ENCODE measurements at regions of chr3 and their contacts with region 1.

Region 1: DNA sequence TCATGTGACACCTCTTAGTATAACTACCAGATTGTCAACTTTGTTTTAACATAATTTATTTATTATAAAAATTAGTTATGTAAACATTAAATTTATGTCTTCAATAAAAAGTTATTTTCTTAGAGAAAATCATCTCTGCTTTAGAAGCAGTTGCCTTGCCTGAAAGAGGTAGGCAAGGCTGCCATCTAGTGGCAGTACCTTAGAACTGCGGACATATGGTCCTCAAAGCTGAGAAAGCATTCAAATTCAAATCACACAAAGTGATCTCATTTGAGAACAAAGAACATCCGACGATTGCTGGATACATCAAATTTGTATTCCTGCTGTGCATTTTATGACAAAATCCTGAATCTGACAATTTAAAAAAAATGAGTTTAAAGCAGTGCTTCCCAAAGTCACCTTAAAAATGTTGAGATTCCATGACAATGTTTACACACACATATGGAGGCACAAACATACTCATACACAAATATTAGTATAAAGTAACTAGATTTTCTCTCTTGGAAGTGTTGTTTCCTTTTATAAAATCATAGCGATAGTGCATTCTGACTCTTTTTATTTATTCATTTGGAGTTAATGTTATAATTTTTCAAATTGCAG is 617.4 kb downstream of the CADM2 start:
- DNase-seq: peak; percentile 44
- ATAC-seq: peak; percentile 45; the same call in 1 of the 3 replicates
- H3K4me3 ChIP-seq: no peak overlapping the region
- H3K27ac ChIP-seq: no peak overlapping the region
- H3K4me1 ChIP-seq: no peaks in the 10 kb centered on the region
- H3K27me3 ChIP-seq: no peaks in the 10 kb centered on the region
- CTCF ChIP-seq: peak; percentile 77
- EP300 ChIP-seq: no peak
- POLR2A ChIP-seq: no peak
- RAD21 ChIP-seq: 0 out of 2 replicates have a peak, but pooled peaks have one; percentile 38

Region 2: DNA sequence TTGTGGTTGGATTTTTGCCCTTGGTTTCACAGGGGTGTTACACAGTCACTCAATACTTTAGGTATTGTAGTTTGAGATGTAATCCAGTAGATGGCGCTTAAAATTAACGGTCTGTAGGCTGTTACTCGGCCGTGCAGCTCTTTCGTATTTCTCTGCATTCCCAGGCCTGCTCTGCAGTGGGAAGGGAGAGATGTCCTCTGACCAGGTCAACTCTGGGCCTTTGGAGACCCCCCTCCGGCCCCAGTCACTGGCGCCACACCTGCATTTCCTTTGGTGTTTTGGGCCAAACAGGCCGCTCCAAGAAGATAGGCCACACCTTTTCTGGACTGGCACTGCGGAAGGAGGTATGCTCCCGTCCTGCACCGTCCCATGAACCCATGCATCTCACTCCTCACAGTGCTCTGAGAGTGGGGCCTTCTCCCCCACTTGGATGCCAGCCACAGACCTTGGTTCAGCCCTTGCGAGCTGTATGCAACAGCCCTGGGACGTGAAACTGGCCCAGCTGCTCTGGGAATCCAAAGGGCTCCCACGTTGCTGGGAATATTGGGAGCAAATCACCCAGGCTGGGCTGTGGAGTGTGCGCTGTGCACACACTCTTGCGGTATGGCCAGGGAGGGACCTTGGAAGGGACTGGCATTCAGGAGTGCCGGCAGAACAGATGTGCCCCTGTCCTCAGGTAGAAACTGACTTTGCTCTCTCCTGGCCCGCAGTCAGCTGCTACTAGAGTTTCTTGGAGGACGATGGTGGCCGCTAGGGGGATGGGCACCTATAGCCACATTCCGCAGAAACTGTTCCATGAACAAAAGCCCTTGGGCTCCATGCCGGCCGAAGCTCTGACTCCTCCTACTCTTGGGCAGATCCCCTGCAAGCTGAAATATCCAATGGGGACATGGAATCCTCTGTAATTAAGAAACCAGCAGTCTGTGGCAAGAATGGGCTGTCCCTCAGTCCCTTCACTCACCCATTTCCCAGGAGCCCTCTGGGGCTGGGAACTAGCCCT is 1027.9 kb before region 1 on chr3:
- CTCF ChIA-PET with region 1: interaction called, 5 read pairs
- POLR2A ChIA-PET with region 1: no interaction called
- in situ Hi-C with region 1: loop called (anchors 25 kb)
- intact Hi-C with region 1: loop called (anchors 1 kb)
- DNase-seq: peak; percentile 36
- ATAC-seq: peak; percentile 97
- H3K4me3 ChIP-seq: peak overlapping the region in 2 of 3 experiments; percentile 15 to 54; a peak in 2 of 6 replicates
- H3K27ac ChIP-seq: no peak overlapping the region
- H3K4me1 ChIP-seq: peaks cover 8% of the 10 kb centered on the region
- H3K27me3 ChIP-seq: no peaks in the 10 kb centered on the region
- CTCF ChIP-seq: peak; percentile 75
- EP300 ChIP-seq: no peak
- POLR2A ChIP-seq: no peak
- RAD21 ChIP-seq: peak; percentile 32; the same call in 1 of the 2 replicates

Region 3: GRCh38 chr3:84974347-84974746 is 601.8 kb before region 1 on chr3:
- CTCF ChIA-PET with region 1: no interaction called
- POLR2A ChIA-PET with region 1: no interaction called
- in situ Hi-C with region 1: no loop called
- intact Hi-C with region 1: loop called (anchors 10 kb)
- DNase-seq: peak; percentile 15
- ATAC-seq: peak; percentile 50; the same call in 1 of the 3 replicates
- H3K4me3 ChIP-seq: no peak overlapping the region
- H3K27ac ChIP-seq: no peak overlapping the region
- H3K4me1 ChIP-seq: no peaks in the 10 kb centered on the region
- H3K27me3 ChIP-seq: no peaks in the 10 kb centered on the region; a peak in 1 of 5 replicates
- CTCF ChIP-seq: peak; percentile 39
- EP300 ChIP-seq: no peak
- POLR2A ChIP-seq: no peak
- RAD21 ChIP-seq: no peak

Region 4: GRCh38 chr3:85304359-85304964 is 271.7 kb before region 1 on chr3:
- CTCF ChIA-PET with region 1: interaction called, 12 read pairs
- POLR2A ChIA-PET with region 1: no interaction called
- in situ Hi-C with region 1: loop called (anchors 10 kb)
- intact Hi-C with region 1: loop called (anchors 1 kb)
- DNase-seq: peak; percentile 3
- ATAC-seq: peak; percentile 32; the same call in 1 of the 3 replicates
- H3K4me3 ChIP-seq: no peak overlapping the region
- H3K27ac ChIP-seq: no peak overlapping the region
- H3K4me1 ChIP-seq: no peaks in the 10 kb centered on the region
- H3K27me3 ChIP-seq: no peaks in the 10 kb centered on the region; a peak in 1 of 5 replicates
- CTCF ChIP-seq: peak; percentile 32
- EP300 ChIP-seq: no peak
- POLR2A ChIP-seq: no peak
- RAD21 ChIP-seq: no peak

Region 5: DNA sequence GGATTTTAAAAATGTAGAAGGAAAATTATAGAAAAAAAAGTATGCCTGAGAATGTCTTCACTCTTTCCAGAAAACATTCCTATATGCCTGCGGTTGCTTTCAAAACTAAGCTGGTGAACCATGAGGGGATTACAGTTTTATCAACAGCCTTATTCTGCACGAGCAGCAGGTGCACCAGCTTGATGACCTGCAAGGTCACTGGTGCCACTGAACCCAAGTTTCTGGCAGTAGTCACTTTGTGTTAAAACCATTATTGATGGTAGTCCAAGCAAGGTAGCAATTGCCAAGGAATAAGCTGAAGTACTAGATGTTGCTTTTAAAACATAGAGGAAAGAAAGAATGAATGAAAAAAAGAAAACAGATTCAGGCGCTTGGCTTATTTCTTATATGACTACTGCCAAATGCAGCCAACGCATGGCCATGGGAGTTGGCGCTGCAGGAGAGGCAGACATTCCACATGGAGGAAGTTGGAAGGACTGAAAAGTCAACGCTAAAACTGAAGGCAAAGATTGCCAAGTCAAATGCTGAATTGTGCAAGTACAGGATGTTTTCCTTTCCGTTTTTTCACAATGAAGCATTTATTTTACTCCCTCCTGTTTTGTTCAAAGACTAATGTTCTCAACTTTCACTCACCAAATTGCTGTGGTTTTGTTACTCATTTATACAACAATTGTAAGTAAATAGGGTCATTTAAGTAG is 16.0 kb before region 1 on chr3:
- CTCF ChIA-PET with region 1: no interaction called
- POLR2A ChIA-PET with region 1: no interaction called
- in situ Hi-C with region 1: no loop called
- intact Hi-C with region 1: no loop called
- DNase-seq: peak; percentile 26
- ATAC-seq: peak; percentile 68
- H3K4me3 ChIP-seq: peak overlapping the region in 1 of 3 experiments; percentile 4; a peak in 1 of 6 replicates
- H3K27ac ChIP-seq: no peak overlapping the region
- H3K4me1 ChIP-seq: peaks cover 9% of the 10 kb centered on the region
- H3K27me3 ChIP-seq: no peaks in the 10 kb centered on the region; a peak in 1 of 5 replicates
- CTCF ChIP-seq: no peak
- EP300 ChIP-seq: 0 out of 4 replicates have a peak, but pooled peaks of 1 of the 2 experiments have one; percentile 31
- POLR2A ChIP-seq: no peak
- RAD21 ChIP-seq: no peak

Region 6: DNA sequence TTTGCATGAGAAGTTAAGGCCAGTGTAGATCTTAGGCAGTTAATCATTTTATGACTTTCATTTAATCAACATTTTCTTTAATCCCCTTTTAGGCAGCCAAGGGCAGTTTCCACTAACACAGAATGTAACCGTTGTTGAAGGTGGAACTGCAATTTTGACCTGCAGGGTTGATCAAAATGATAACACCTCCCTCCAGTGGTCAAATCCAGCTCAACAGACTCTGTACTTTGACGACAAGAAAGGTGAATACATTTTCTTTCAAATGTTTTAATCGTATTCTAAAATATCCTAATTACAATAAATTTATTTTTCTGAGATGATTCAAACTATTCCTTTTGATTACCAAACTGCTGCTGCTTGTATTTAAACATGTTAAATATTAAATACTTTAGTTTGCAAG is 225.8 kb after region 1 on chr3:
- CTCF ChIA-PET with region 1: no interaction called
- POLR2A ChIA-PET with region 1: no interaction called
- in situ Hi-C with region 1: no loop called
- intact Hi-C with region 1: loop called (anchors 10 kb)
- DNase-seq: peak; percentile 20
- ATAC-seq: peak; percentile 78; the same call in 2 of the 3 replicates
- H3K4me3 ChIP-seq: no peak overlapping the region
- H3K27ac ChIP-seq: no peak overlapping the region
- H3K4me1 ChIP-seq: no peaks in the 10 kb centered on the region
- H3K27me3 ChIP-seq: no peaks in the 10 kb centered on the region
- CTCF ChIP-seq: peak; percentile 26; the same call in 1 of the 2 replicates
- EP300 ChIP-seq: no peak
- POLR2A ChIP-seq: no peak
- RAD21 ChIP-seq: no peak

Measured in HepG2 (cell line).